GM12878 (cell line): ENCODE measurements at regions of chr2 and their contacts with region 1.

Region 1: DNA sequence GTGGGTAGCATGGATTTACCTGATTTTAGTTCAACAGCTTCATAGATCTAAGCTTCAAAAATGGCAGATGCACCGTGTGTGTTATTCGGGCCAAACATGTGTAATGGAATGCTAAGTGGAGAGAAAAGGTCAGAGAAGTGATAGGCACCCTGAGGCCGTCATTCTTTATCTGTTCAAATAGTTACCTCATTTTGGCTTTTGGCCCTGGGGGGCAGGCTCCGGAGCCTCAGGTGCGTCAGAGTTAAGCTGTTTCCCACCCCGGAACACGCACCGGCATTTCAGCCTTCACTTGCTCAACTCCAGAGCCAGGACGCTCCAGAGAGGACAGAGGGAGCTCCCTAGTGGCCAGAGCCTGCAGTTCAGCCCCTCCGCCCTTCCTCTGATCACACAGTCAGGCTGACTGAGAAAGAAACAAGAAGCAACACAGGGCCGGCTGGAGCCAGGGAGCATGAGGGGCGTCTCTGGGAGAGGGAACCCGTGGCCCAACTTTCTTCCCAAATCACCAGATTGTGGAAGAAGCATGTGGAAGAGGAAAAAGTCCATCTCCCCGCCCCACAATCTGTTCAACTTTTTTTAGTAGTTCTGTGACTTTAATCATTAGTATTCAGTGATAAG is 135.2 kb upstream of the EPC2 start:
- DNase-seq: peak; percentile 59
- ATAC-seq: peak; percentile 100
- H3K4me3 ChIP-seq: no peak overlapping the region
- H3K27ac ChIP-seq: no peak overlapping the region
- H3K4me1 ChIP-seq: no peaks in the 10 kb centered on the region
- H3K27me3 ChIP-seq: no peaks in the 10 kb centered on the region
- CTCF ChIP-seq: peak; percentile 97 to 99 (median 99); a peak in 5 of 6 replicates
- EP300 ChIP-seq: no peak
- POLR2A ChIP-seq: no peak
- RAD21 ChIP-seq: peak; percentile 99

Region 2: DNA sequence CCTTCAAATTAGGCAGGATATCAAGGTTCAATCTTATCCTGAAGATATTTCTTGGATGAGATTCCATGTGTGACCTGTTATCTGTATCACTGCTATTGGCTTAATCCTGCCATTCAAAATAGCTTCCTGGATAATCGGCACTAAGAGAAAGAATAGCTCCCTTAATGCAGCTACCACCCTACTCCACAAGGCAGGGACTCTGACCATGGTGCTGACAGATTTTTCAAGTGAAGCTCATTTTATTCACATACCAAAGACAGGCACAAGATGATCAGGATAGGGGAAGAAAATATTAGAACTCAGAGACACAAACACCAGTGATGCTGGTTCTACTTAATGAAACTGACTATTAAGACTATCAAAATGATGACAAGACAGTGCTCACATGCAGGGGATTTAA is 563.7 kb before region 1 on chr2:
- CTCF ChIA-PET with region 1: interaction called, 14 read pairs
- POLR2A ChIA-PET with region 1: no interaction called
- RAD21 ChIA-PET with region 1: interaction called, 6 read pairs
- SMC1A ChIA-PET with region 1: interaction called, 15 read pairs
- in situ Hi-C with region 1: no loop called
- intact Hi-C with region 1: no loop called
- DNase-seq: no peak
- ATAC-seq: no peak
- H3K4me3 ChIP-seq: no peak overlapping the region
- H3K27ac ChIP-seq: no peak overlapping the region
- H3K4me1 ChIP-seq: no peaks in the 10 kb centered on the region
- H3K27me3 ChIP-seq: no peaks in the 10 kb centered on the region
- CTCF ChIP-seq: no peak
- EP300 ChIP-seq: no peak
- POLR2A ChIP-seq: no peak
- RAD21 ChIP-seq: no peak

Region 3: DNA sequence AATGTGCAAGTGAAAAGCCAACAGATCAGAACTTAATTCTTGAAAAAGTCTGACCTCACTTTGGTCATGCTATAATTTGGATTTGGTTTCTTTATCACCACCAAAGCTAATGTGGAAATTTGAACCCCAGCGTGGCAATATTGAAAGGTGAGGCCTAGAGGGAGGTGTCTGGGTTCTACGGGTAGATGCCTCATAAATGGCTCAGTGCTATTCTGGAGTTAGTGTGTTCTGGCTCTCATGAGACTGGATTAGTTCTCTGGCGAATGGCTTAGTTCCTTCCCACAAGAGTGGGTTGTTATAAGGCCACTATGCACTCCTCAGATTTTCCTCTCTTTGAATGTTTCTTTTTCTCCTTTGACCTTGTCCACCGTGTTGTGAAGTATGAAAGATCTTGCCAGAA is 511.2 kb before region 1 on chr2:
- CTCF ChIA-PET with region 1: interaction called, 275 read pairs
- POLR2A ChIA-PET with region 1: no interaction called
- RAD21 ChIA-PET with region 1: interaction called, 13 read pairs
- SMC1A ChIA-PET with region 1: interaction called, 145 read pairs
- in situ Hi-C with region 1: loop called (anchors 5 kb)
- intact Hi-C with region 1: no loop called
- DNase-seq: no peak
- ATAC-seq: peak; percentile 37
- H3K4me3 ChIP-seq: no peak overlapping the region
- H3K27ac ChIP-seq: no peak overlapping the region
- H3K4me1 ChIP-seq: no peaks in the 10 kb centered on the region
- H3K27me3 ChIP-seq: no peaks in the 10 kb centered on the region
- CTCF ChIP-seq: no peak
- EP300 ChIP-seq: no peak
- POLR2A ChIP-seq: no peak
- RAD21 ChIP-seq: no peak

Region 4: GRCh38 chr2:148201075-148202004 is 308.1 kb before region 1 on chr2:
- CTCF ChIA-PET with region 1: interaction called, 3 read pairs
- POLR2A ChIA-PET with region 1: no interaction called
- RAD21 ChIA-PET with region 1: interaction called, 4 read pairs
- SMC1A ChIA-PET with region 1: no interaction called
- in situ Hi-C with region 1: no loop called
- intact Hi-C with region 1: loop called (anchors 10 kb)
- DNase-seq: no peak
- ATAC-seq: peak; percentile 85
- H3K4me3 ChIP-seq: no peak overlapping the region
- H3K27ac ChIP-seq: no peak overlapping the region
- H3K4me1 ChIP-seq: no peaks in the 10 kb centered on the region
- H3K27me3 ChIP-seq: no peaks in the 10 kb centered on the region
- CTCF ChIP-seq: peak in 2 of 3 experiments; percentile 47 to 51; a peak in 4 of 6 replicates
- EP300 ChIP-seq: no peak
- POLR2A ChIP-seq: no peak
- RAD21 ChIP-seq: peak; percentile 45

Region 5: GRCh38 chr2:148483666-148484065 is 25.7 kb before region 1 on chr2:
- CTCF ChIA-PET with region 1: interaction called, 13 read pairs
- POLR2A ChIA-PET with region 1: no interaction called
- RAD21 ChIA-PET with region 1: interaction called, 9 read pairs
- SMC1A ChIA-PET with region 1: interaction called, 6 read pairs
- in situ Hi-C with region 1: no loop called
- intact Hi-C with region 1: no loop called
- DNase-seq: no peak
- ATAC-seq: no peak; the same call in 2 of the 3 replicates
- H3K4me3 ChIP-seq: no peak overlapping the region
- H3K27ac ChIP-seq: no peak overlapping the region
- H3K4me1 ChIP-seq: no peaks in the 10 kb centered on the region
- H3K27me3 ChIP-seq: no peaks in the 10 kb centered on the region
- CTCF ChIP-seq: no peak
- EP300 ChIP-seq: no peak
- POLR2A ChIP-seq: no peak
- RAD21 ChIP-seq: no peak

Region 6: DNA sequence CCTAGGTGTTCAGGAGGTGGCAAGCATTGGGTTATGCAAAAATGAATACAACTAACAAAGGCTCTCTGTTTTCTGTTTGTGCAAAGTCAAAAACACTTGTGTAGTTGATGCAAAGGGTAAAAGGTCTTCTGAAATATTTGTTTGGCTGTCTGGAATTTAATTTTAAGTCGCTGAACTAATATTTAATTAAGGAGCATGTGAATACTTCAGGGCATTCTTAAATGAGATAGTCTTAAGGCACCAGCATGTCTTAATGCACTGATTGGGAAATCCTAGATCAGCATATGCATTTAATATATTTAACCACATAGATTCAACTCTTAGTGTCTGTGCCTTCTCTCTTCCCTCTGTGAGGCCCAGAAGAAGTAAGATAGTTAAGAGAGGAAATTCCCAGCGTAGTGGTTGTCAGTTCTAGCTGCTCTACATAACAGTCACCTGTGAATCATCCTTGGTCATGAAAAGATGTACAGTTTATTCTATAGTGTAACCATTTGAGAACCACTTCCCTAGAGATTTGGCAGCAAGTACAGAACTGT is 247.1 kb after region 1 on chr2:
- CTCF ChIA-PET with region 1: no interaction called
- POLR2A ChIA-PET with region 1: no interaction called
- RAD21 ChIA-PET with region 1: no interaction called
- SMC1A ChIA-PET with region 1: no interaction called
- in situ Hi-C with region 1: no loop called
- intact Hi-C with region 1: no loop called
- DNase-seq: no peak
- ATAC-seq: no peak
- H3K4me3 ChIP-seq: no peak overlapping the region
- H3K27ac ChIP-seq: no peak overlapping the region
- H3K4me1 ChIP-seq: no peaks in the 10 kb centered on the region
- H3K27me3 ChIP-seq: no peaks in the 10 kb centered on the region
- CTCF ChIP-seq: no peak
- EP300 ChIP-seq: no peak
- POLR2A ChIP-seq: no peak
- RAD21 ChIP-seq: no peak

Region 7: GRCh38 chr2:148989882-148990493 is 480.6 kb after region 1 on chr2:
- CTCF ChIA-PET with region 1: interaction called, 10 read pairs
- POLR2A ChIA-PET with region 1: no interaction called
- RAD21 ChIA-PET with region 1: interaction called, 13 read pairs
- SMC1A ChIA-PET with region 1: interaction called, 4 read pairs
- in situ Hi-C with region 1: no loop called
- intact Hi-C with region 1: loop called (anchors 1 kb)
- DNase-seq: peak; percentile 23
- ATAC-seq: peak; percentile 98
- H3K4me3 ChIP-seq: no peak overlapping the region
- H3K27ac ChIP-seq: no peak overlapping the region
- H3K4me1 ChIP-seq: no peaks in the 10 kb centered on the region
- H3K27me3 ChIP-seq: no peaks in the 10 kb centered on the region
- CTCF ChIP-seq: peak; percentile 57 to 76 (median 72); a peak in 5 of 6 replicates
- EP300 ChIP-seq: no peak
- POLR2A ChIP-seq: no peak
- RAD21 ChIP-seq: peak; percentile 97